ENCODE measurements at regions of chr21 and their contacts with region 1.

Region 1: GRCh38 chr21:45439161-45439872 is 34.4 kb downstream of the COL18A1 start:
- DNase-seq: peak; percentile 58 to 78
- ATAC-seq: peak; percentile 69 to 91
- H3K4me3 ChIP-seq: no peak overlapping the region
- H3K27ac ChIP-seq: peak overlapping the region; percentile 64 to 84
- H3K4me1 ChIP-seq: peaks cover 16% of the 10 kb centered on the region
- CTCF ChIP-seq: peak; percentile 78
- EP300 ChIP-seq: no peak
- POLR2A ChIP-seq: no peak
- RAD21 ChIP-seq: peak; percentile 93 to 95

Region 2: DNA sequence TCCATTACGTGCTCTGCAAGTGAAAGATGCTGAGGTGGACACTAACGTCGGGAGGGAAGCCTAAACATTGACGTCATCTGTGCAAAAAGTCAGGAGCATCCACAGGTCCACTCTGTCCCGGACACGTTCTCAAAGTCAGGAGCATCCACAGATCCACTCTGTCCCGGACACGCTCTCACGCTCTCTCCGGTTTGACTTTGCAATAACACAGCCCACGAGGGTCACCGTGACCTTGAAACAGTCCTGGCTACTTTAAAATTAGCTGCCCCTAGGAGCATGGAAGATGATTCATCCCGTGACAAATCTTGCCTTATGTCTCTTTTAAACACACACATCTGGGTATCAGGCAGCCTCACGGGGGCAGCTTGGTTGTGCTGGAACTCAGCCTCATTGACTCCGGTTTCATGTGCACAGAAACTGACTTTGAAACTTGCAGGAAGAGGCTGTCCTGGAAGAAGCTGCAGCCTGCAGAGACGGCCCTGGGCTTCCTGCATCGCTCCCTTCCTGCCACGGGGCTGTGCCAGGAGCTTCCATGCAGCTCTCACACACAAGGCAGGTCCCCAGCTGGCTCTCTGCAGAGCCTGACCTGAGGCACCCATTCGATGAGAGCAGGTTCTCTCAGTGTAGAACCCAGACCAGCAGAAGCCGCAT is 52.5 kb before region 1 on chr21:
- CTCF ChIA-PET with region 1: interaction called, 13 read pairs
- POLR2A ChIA-PET with region 1: no interaction called
- DNase-seq: peak in 1 of 2 experiments; percentile 45
- ATAC-seq: peak; percentile 66 to 82
- H3K4me3 ChIP-seq: no peak overlapping the region
- H3K27ac ChIP-seq: peak overlapping the region; percentile 27 to 80; a peak in 3 of 6 replicates
- H3K4me1 ChIP-seq: peaks cover 17% of the 10 kb centered on the region
- CTCF ChIP-seq: no peak
- EP300 ChIP-seq: no peak
- POLR2A ChIP-seq: no peak
- RAD21 ChIP-seq: 0 out of 5 replicates have a peak, but pooled peaks have one; percentile 27 to 31

Region 3: DNA sequence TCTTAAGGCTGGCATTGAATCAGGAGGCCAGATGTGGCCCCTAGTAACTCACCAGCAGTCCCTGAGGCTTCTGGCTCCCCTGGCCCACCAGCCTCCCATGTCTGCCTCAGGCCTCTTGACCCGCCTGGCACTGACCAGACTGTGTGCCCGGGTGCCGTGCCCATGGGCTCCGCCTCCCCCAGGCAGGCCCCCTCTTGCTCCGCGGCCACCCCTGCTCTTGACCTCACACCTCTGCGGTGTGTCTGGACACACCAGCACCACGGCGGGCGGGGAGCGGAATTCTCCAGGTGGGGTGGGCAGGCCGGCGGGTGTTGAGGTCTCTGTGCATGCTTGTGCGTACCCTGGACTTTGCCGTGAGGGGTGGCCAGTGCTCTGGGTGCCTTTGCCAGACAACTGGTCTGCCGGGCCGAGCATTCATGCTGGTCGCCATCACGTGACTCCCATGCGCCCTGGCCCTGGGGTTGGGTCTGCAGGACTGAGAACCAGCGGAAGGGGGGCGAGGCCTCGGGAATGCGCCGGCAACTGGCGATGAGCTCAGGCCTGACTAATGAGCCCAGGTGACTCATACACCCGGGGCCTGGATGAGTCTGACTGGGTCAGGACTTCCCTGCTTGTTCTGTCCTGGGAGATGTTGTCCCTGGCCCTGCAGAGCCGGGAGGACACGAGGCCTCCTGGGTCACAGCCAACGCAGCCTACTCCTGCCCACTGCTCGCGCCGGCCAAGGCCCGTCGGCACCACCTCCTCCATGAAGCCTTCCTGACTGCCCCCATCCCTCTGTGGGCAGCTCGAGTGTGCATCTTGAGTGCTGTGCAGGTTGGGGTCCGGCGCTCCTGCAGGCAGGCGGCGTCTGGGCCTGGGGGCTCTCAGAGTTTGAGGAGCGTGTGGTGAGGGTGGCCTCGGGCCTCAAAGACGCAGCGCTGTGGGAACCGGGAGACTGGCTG is 11.7 kb before region 1 on chr21:
- CTCF ChIA-PET with region 1: interaction called, 13 read pairs
- POLR2A ChIA-PET with region 1: no interaction called
- DNase-seq: peak; percentile 89 to 92
- ATAC-seq: peak; percentile 94 to 95
- H3K4me3 ChIP-seq: no peak overlapping the region
- H3K27ac ChIP-seq: peak overlapping the region; percentile 97 to 98
- H3K4me1 ChIP-seq: peaks cover 53% of the 10 kb centered on the region
- CTCF ChIP-seq: no peak
- EP300 ChIP-seq: peak in 1 of 2 experiments; percentile 19; a peak in 1 of 5 replicates
- POLR2A ChIP-seq: no peak
- RAD21 ChIP-seq: no peak

Region 4: GRCh38 chr21:45534663-45535331 is 95.5 kb after region 1 on chr21:
- CTCF ChIA-PET with region 1: no interaction called
- POLR2A ChIA-PET with region 1: no interaction called
- DNase-seq: no peak
- ATAC-seq: no peak
- H3K4me3 ChIP-seq: no peak overlapping the region
- H3K27ac ChIP-seq: no peak overlapping the region
- H3K4me1 ChIP-seq: no peaks in the 10 kb centered on the region
- CTCF ChIP-seq: no peak
- EP300 ChIP-seq: no peak
- POLR2A ChIP-seq: no peak
- RAD21 ChIP-seq: no peak